ENCODE measurements at regions of chr3 and their contacts with region 1.

Region 1: GRCh38 chr3:52001443-52001974 is 5.8 kb upstream of the RPL29 start:
- DNase-seq: peak; percentile 94
- CTCF ChIP-seq: peak; percentile 99

Region 2: DNA sequence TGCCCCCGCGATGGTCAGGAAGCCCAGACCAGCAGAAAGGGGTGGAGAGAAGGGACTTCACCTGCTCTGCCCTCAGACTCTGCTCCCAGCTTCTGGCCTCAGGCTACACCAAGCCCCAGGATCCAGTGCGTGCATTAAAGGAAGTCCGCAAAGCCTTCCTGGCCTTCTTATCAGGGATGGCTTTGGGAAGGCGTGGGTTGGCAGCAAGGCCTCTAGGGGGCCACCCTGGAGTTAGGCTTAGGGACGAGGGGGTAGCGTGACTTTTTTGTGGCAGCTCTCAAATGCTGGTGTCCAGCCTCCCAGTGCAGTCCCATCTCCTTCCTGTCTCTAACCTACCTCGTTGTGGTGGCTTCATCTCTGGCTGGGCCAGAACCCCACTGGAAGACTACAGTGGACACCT is 13.1 kb after region 1 on chr3:
- CTCF ChIA-PET with region 1: interaction called, 91 read pairs
- POLR2A ChIA-PET with region 1: no interaction called
- DNase-seq: no peak
- CTCF ChIP-seq: no peak

Region 3: DNA sequence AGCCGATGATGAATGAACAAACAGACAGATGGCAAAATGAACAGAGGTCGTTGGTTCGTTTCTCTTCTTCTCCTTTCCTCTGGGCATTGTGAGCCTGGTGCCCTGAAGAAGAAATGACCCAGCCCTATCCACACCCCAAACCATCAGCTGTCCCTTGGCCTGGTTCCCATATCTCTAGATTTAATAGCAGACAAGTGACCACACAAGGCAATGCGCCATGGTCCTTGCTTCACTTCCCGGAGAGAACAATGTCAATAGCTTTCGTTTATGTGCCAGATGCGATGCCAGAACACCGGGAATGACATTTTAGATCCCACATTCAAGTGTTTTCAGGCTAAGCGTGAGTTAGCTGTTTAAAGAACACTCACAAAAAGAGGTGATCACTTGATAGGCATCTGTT is 135.0 kb after region 1 on chr3:
- CTCF ChIA-PET with region 1: interaction called, 172 read pairs
- POLR2A ChIA-PET with region 1: no interaction called
- DNase-seq: no peak
- CTCF ChIP-seq: no peak

Region 4: GRCh38 chr3:52144034-52144795 is 142.7 kb after region 1 on chr3:
- CTCF ChIA-PET with region 1: interaction called, 172 read pairs
- POLR2A ChIA-PET with region 1: interaction called, 4 read pairs
- DNase-seq: peak; percentile 88
- CTCF ChIP-seq: peak; percentile 95

Region 5: GRCh38 chr3:52154117-52155094 is 152.9 kb after region 1 on chr3 and contains the start of gene POC1A:
- CTCF ChIA-PET with region 1: interaction called, 13 read pairs
- POLR2A ChIA-PET with region 1: no interaction called
- DNase-seq: peak; percentile 92
- CTCF ChIP-seq: no peak

Region 6: DNA sequence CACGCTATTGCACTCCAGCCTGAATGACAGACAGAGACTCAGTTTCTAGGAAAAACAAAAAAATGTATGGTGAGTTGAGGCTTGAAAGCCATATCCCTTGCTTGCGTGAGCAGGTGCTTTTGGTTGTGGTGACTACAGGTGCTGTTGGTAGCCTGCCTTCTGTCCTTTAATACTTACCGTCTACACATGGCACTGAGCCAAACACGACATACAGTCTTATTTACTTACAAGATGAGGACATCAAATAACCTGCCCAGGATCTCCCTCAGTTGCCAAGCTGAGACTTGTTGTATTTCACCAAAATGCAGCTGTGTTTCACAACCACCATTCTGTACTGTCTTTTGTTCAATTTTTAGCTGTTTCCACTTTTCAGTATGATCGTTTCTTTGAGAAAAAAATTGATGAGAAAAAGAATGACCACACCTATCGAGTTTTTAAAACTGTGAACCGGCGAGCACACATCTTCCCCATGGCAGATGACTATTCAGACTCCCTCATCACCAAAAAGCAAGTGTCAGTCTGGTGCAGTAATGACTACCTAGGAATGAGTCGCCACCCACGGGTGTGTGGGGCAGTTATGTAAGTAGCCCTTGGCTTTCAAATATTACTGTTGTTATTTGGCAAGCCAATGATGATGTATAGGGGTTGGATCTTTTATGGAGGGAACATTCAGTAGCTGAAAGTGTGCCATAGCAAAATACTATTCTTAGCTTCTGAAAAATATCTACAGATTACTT is 203.0 kb after region 1 on chr3:
- CTCF ChIA-PET with region 1: interaction called, 11 read pairs
- POLR2A ChIA-PET with region 1: no interaction called
- DNase-seq: no peak
- CTCF ChIP-seq: no peak